ENCODE measurements at regions of chr2 and their contacts with region 1.

Region 1: DNA sequence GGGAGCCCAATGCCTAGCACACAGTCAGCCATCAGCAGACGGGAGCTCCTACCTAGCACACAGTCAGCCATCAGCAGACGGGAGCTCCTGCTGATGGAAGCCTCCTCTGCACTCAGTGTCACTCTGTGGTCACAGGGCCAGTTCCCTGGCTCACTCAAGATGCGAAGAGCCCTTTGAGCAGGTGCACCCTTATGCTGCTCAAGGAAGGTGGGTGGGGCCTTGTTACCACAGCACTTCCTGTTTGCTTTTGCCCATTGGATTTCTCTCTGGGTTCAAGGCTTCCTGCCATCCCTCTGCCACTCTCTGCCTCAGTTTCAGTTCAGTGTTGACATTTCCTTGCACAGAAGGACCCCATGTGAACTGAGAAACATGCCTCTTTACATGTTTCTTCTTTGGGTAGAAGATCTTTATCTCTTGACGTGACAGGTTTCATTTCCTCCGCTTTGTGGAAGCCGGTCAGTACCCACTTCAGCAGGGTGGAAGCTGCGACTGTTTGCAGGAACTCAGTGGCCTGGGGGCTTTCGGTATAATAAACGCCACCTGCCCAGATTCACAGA is 11.6 kb downstream of the TRIB2 start:
- DNase-seq: no peak
- H3K4me3 ChIP-seq: no peak overlapping the region
- H3K27ac ChIP-seq: peak overlapping the region in 1 of 5 donors; percentile 67
- H3K4me1 ChIP-seq: peaks cover 24 to 79% of the 10 kb centered on the region in 2 donors
- H3K27me3 ChIP-seq: no peaks in the 10 kb centered on the region
- CTCF ChIP-seq: no peak
- POLR2A ChIP-seq: no peak

Region 2: GRCh38 chr2:12923907-12924610 is 195.8 kb after region 1 on chr2:
- intact Hi-C with region 1: loop called (anchors 5 to 10 kb)
- DNase-seq: no peak
- H3K4me3 ChIP-seq: no peak overlapping the region
- H3K27ac ChIP-seq: no peak overlapping the region
- H3K4me1 ChIP-seq: peaks cover 0 to 6% of the 10 kb centered on the region in 2 donors
- H3K27me3 ChIP-seq: no peaks in the 10 kb centered on the region
- CTCF ChIP-seq: no peak
- POLR2A ChIP-seq: no peak

Measured in adrenal gland (tissue), 19 donors.